ENCODE measurements at regions of chr1 and their contacts with region 1.

Region 1: GRCh38 chr1:245156081-245156735 is 1.4 kb downstream of the KIF26B start:
- DNase-seq: peak; percentile 90
- ATAC-seq: peak; percentile 92

Region 2: GRCh38 chr1:245079021-245079609 is 77.1 kb before region 1 on chr1:
- intact Hi-C with region 1: no loop called
- DNase-seq: no peak
- ATAC-seq: no peak

Region 3: DNA sequence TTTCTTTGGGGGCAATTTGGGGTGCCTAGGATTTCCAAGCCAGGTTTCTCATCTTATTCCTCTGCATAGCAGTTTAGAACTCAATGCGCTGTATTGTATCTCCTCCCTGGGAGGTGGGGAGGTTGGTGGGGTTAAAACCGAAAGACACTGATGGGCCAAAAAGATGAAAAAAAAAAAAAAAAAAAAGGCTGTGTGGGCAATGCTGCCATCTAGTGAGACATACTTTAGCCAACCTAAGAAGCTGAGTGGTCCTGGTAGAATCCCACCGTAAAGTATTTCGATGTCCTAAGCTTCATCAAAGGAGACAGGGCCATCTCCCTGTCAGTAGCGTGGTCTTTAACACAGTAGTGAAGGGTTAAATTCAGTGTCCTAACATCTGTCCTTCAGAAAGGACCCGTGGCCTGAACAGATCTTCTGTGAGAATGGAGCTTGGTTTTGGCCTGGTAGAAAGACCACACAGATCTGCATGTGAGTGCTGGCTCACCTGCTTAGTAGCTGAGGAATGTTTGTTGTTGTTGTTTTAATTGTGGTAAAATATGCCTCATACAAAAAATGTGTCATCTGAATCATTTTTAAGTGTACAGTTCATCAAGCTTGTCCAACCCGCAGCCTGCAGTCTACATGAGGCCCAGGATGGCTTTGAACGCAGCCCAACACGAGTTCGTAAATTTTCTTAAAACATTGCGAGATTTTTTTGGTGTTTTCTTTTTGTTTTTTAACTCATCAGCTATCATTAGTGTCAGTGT is 224.8 kb after region 1 on chr1:
- intact Hi-C with region 1: loop called (anchors 10 kb)
- DNase-seq: no peak
- ATAC-seq: no peak

Region 4: GRCh38 chr1:246002725-246003441 is 846.7 kb after region 1 on chr1:
- intact Hi-C with region 1: loop called (anchors 5 kb)
- DNase-seq: peak; percentile 93
- ATAC-seq: peak; percentile 79

Region 5: GRCh38 chr1:246497331-246497915 is 1341.2 kb after region 1 on chr1:
- intact Hi-C with region 1: loop called (anchors 2 kb)
- DNase-seq: no peak
- ATAC-seq: no peak

Measured in left ventricle myocardium superior (tissue), 1 donor.